ENCODE measurements at regions of chr2 and their contacts with region 1.

Region 1: GRCh38 chr2:120680136-120680761 is 55.4 kb upstream of the GLI2 start:
- DNase-seq: peak; percentile 48 to 58 (median 55)
- H3K4me3 ChIP-seq: no peak overlapping the region
- H3K4me3 Mint-ChIP-seq: peak overlapping the region in 4 of 8 donors; percentile 15 to 44 (median 36)
- H3K27ac ChIP-seq: no peak overlapping the region
- H3K27ac Mint-ChIP-seq: peak overlapping the region in 3 of 7 donors; percentile 17 to 89 (median 57)
- H3K4me1 ChIP-seq: no peaks in the 10 kb centered on the region
- H3K4me1 Mint-ChIP-seq: peaks cover 0 to 6% (median 4%) of the 10 kb centered on the region in 4 donors
- H3K27me3 ChIP-seq: no peaks in the 10 kb centered on the region
- H3K27me3 Mint-ChIP-seq: peaks cover 14 to 20% of the 10 kb centered on the region in 2 donors

Region 2: GRCh38 chr2:119407430-119408220 is 1272.6 kb before region 1 on chr2:
- CTCF ChIA-PET with region 1: interaction called, 5 read pairs
- POLR2A ChIA-PET with region 1: no interaction called
- intact Hi-C with region 1: loop called (anchors 5 kb)
- DNase-seq: peak in 3 of 5 donors; percentile 10 to 18 (median 11)
- H3K4me3 ChIP-seq: no peak overlapping the region
- H3K4me3 Mint-ChIP-seq: no peak overlapping the region
- H3K27ac ChIP-seq: no peak overlapping the region
- H3K27ac Mint-ChIP-seq: no peak overlapping the region
- H3K4me1 ChIP-seq: no peaks in the 10 kb centered on the region
- H3K4me1 Mint-ChIP-seq: no peaks in the 10 kb centered on the region
- H3K27me3 ChIP-seq: no peaks in the 10 kb centered on the region
- H3K27me3 Mint-ChIP-seq: peaks cover 2 to 6% of the 10 kb centered on the region in 2 donors

Region 3: GRCh38 chr2:119641562-119642258 is 1038.5 kb before region 1 on chr2:
- CTCF ChIA-PET with region 1: interaction called, 22 read pairs
- POLR2A ChIA-PET with region 1: no interaction called
- intact Hi-C with region 1: no loop called
- DNase-seq: peak; percentile 56 to 62 (median 60)
- H3K4me3 ChIP-seq: no peak overlapping the region
- H3K4me3 Mint-ChIP-seq: no peak overlapping the region
- H3K27ac ChIP-seq: no peak overlapping the region
- H3K27ac Mint-ChIP-seq: peak overlapping the region in 1 of 7 donors; percentile 37
- H3K4me1 ChIP-seq: no peaks in the 10 kb centered on the region
- H3K4me1 Mint-ChIP-seq: peaks cover 0 to 7% (median 3%) of the 10 kb centered on the region in 4 donors
- H3K27me3 ChIP-seq: no peaks in the 10 kb centered on the region
- H3K27me3 Mint-ChIP-seq: peaks cover 0 to 13% of the 10 kb centered on the region in 2 donors

Region 4: GRCh38 chr2:119702918-119703401 is 977.3 kb before region 1 on chr2:
- CTCF ChIA-PET with region 1: interaction called, 3 read pairs
- POLR2A ChIA-PET with region 1: no interaction called
- intact Hi-C with region 1: loop called (anchors 2 kb)
- DNase-seq: peak in 4 of 5 donors; percentile 55 to 69 (median 60)
- H3K4me3 ChIP-seq: no peak overlapping the region
- H3K4me3 Mint-ChIP-seq: peak overlapping the region in 2 of 8 donors; percentile 15 to 20
- H3K27ac ChIP-seq: no peak overlapping the region
- H3K27ac Mint-ChIP-seq: peak overlapping the region in 2 of 7 donors; percentile 22 to 64
- H3K4me1 ChIP-seq: peaks cover 20% of the 10 kb centered on the region
- H3K4me1 Mint-ChIP-seq: peaks cover 1 to 23% (median 13%) of the 10 kb centered on the region in 4 donors
- H3K27me3 ChIP-seq: no peaks in the 10 kb centered on the region
- H3K27me3 Mint-ChIP-seq: no peaks in the 10 kb centered on the region

Region 5: GRCh38 chr2:120109186-120110061 is 570.8 kb before region 1 on chr2:
- CTCF ChIA-PET with region 1: interaction called, 12 read pairs
- POLR2A ChIA-PET with region 1: no interaction called
- intact Hi-C with region 1: no loop called
- DNase-seq: peak in 4 of 5 donors; percentile 49 to 64 (median 56)
- H3K4me3 ChIP-seq: peak overlapping the region in 1 of 2 donors; percentile 25
- H3K4me3 Mint-ChIP-seq: peak overlapping the region; percentile 49 to 89 (median 80)
- H3K27ac ChIP-seq: peak overlapping the region; percentile 23
- H3K27ac Mint-ChIP-seq: peak overlapping the region in 6 of 7 donors; percentile 45 to 91 (median 64)
- H3K4me1 ChIP-seq: peaks cover 23% of the 10 kb centered on the region
- H3K4me1 Mint-ChIP-seq: peaks cover 18 to 24% (median 21%) of the 10 kb centered on the region in 4 donors
- H3K27me3 ChIP-seq: no peaks in the 10 kb centered on the region
- H3K27me3 Mint-ChIP-seq: peaks cover 0 to 1% of the 10 kb centered on the region in 2 donors

Region 6: GRCh38 chr2:120343433-120344105 is 336.7 kb before region 1 on chr2:
- CTCF ChIA-PET with region 1: interaction called, 7 read pairs
- POLR2A ChIA-PET with region 1: no interaction called
- intact Hi-C with region 1: loop called (anchors 1 kb)
- DNase-seq: peak; percentile 37 to 49 (median 43)
- H3K4me3 ChIP-seq: no peak overlapping the region
- H3K4me3 Mint-ChIP-seq: peak overlapping the region; percentile 66 to 84 (median 70)
- H3K27ac ChIP-seq: no peak overlapping the region
- H3K27ac Mint-ChIP-seq: peak overlapping the region in 2 of 7 donors; percentile 54 to 57
- H3K4me1 ChIP-seq: peaks cover 29% of the 10 kb centered on the region
- H3K4me1 Mint-ChIP-seq: peaks cover 8 to 27% (median 22%) of the 10 kb centered on the region in 4 donors
- H3K27me3 ChIP-seq: peaks cover 27% of the 10 kb centered on the region
- H3K27me3 Mint-ChIP-seq: peaks cover 36 to 43% of the 10 kb centered on the region in 2 donors

Region 7: GRCh38 chr2:120691410-120691809 is 11.2 kb after region 1 on chr2:
- CTCF ChIA-PET with region 1: interaction called, 16 read pairs
- POLR2A ChIA-PET with region 1: no interaction called
- intact Hi-C with region 1: no loop called
- DNase-seq: no peak
- H3K4me3 ChIP-seq: no peak overlapping the region
- H3K4me3 Mint-ChIP-seq: no peak overlapping the region
- H3K27ac ChIP-seq: no peak overlapping the region
- H3K27ac Mint-ChIP-seq: no peak overlapping the region
- H3K4me1 ChIP-seq: no peaks in the 10 kb centered on the region
- H3K4me1 Mint-ChIP-seq: peaks cover 0 to 6% (median 4%) of the 10 kb centered on the region in 4 donors
- H3K27me3 ChIP-seq: no peaks in the 10 kb centered on the region
- H3K27me3 Mint-ChIP-seq: peaks cover 17 to 21% of the 10 kb centered on the region in 2 donors

Region 8: DNA sequence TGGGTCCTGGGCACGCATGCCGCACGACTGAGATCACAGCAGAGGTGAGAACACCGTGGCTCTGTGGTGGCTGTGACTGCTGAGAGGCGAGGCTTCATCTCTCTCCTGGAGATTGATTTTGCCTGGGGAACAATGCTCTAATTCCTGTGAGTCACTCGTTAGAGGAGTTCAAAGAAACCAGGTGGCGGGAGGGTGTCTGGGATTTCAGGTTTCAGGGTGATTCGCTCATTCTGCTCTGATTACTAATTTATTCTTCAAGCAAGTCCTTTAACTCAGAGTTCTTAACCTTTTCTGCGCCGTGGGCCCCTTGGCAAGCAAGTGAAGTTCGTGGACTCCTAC is 111.7 kb after region 1 on chr2:
- CTCF ChIA-PET with region 1: no interaction called
- POLR2A ChIA-PET with region 1: no interaction called
- intact Hi-C with region 1: no loop called
- DNase-seq: no peak
- H3K4me3 ChIP-seq: no peak overlapping the region
- H3K4me3 Mint-ChIP-seq: no peak overlapping the region
- H3K27ac ChIP-seq: no peak overlapping the region
- H3K27ac Mint-ChIP-seq: no peak overlapping the region
- H3K4me1 ChIP-seq: no peaks in the 10 kb centered on the region
- H3K4me1 Mint-ChIP-seq: no peaks in the 10 kb centered on the region
- H3K27me3 ChIP-seq: no peaks in the 10 kb centered on the region
- H3K27me3 Mint-ChIP-seq: no peaks in the 10 kb centered on the region

Region 9: DNA sequence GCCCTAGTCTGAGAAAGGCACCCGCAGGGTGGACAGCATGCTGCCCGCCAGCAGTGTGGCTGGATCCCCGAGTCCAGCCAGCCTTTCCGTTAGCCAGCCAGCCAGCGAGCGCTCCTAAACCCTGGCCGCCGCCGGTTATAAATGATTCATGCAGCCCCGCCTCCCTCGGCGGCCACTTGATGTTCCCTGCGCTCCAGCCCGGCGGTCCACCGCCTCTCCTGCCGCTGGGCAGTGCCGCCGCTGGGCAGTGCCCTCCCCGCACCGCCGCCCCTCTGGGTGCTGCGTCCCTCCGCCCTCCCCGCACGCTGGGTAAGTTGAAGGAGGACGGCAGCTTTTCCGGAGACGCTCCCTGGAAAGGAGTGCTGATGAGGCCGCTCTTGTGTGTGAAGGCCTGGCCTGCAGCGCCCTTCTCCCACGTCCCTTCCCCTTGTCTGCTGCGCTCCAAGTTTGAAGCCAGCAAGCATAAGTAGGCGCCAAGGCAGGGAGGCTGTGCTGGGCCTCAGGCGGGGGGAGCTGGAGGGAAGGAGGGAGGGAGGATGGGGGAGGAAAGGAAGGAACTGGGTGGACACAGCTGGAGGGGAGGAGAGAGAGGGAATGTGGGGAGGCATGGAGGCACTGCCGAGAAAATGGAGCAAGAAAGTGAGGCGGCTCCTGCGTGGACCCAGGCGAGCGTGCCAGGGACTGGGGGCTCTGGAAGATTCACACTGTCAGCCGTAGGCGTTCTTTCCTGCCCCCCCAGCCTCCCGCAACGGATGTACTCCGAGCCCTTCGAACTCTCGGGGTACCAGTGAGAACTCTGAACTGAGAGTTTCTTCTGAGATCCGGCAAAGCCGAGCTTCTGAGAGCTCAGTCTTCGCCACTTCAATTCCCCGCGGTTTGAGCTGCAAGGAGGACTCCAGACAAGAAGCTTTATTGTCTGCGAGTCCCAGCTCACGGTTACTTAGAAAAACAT is 187.3 kb after region 1 on chr2:
- CTCF ChIA-PET with region 1: no interaction called
- POLR2A ChIA-PET with region 1: no interaction called
- intact Hi-C with region 1: no loop called
- DNase-seq: no peak
- H3K4me3 ChIP-seq: no peak overlapping the region
- H3K4me3 Mint-ChIP-seq: peak overlapping the region in 1 of 8 donors; percentile 26
- H3K27ac ChIP-seq: no peak overlapping the region
- H3K27ac Mint-ChIP-seq: no peak overlapping the region
- H3K4me1 ChIP-seq: no peaks in the 10 kb centered on the region
- H3K4me1 Mint-ChIP-seq: peaks cover 0 to 4% (median 0%) of the 10 kb centered on the region in 4 donors
- H3K27me3 ChIP-seq: no peaks in the 10 kb centered on the region
- H3K27me3 Mint-ChIP-seq: peaks cover 21 to 29% of the 10 kb centered on the region in 2 donors